AG04449 (cell line): ENCODE measurements at regions of chr17 and their contacts with region 1.

Region 1: GRCh38 chr17:48047741-48048383 is at the start of gene NFE2L1:
- DNase-seq: peak; percentile 98
- H3K4me3 ChIP-seq: peak within 1 kb of the TSS; percentile 93
- CTCF ChIP-seq: no peak

Region 2: GRCh38 chr17:47305302-47305923 is 742.4 kb before region 1 on chr17:
- CTCF ChIA-PET with region 1: no interaction called
- POLR2A ChIA-PET with region 1: no interaction called
- DNase-seq: peak; percentile 85
- H3K4me3 ChIP-seq: no peak overlapping the region
- CTCF ChIP-seq: no peak

Region 3: DNA sequence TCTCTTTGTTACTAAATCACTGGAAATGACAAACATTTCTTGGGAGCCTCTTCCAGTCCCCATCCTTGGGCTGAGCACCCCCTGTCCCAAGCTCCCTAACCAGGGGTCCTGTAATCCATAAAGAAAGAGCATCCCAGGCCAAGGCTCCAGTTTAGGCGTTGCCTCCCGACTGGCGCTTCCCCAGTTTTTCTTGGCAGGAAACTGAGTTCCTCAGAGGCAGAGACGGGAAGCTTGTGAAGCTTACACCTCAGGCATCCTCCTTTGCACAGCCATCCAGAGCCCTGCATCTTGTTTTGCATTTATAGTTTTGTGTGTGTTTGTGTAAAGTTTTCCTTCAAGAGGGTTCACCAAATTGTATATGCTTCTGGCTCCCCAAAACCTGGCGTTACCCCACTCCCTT is 17.3 kb before region 1 on chr17:
- CTCF ChIA-PET with region 1: interaction called, 28 read pairs
- POLR2A ChIA-PET with region 1: interaction called, 36 read pairs
- DNase-seq: no peak
- H3K4me3 ChIP-seq: no peak overlapping the region
- CTCF ChIP-seq: no peak

Region 4: GRCh38 chr17:48037036-48037837 is 10.6 kb before region 1 on chr17 and contains the start of gene COPZ2:
- CTCF ChIA-PET with region 1: interaction called, 14 read pairs
- POLR2A ChIA-PET with region 1: interaction called, 27 read pairs
- DNase-seq: no peak
- H3K4me3 ChIP-seq: peak within 1 kb of the TSS; percentile 76
- CTCF ChIP-seq: peak; percentile 81

Region 5: GRCh38 chr17:48101012-48101720 is 53.3 kb after region 1 on chr17 and contains the start of gene CBX1:
- CTCF ChIA-PET with region 1: interaction called, 4 read pairs
- POLR2A ChIA-PET with region 1: interaction called, 13 read pairs
- DNase-seq: peak; percentile 46
- H3K4me3 ChIP-seq: peak within 1 kb of the TSS; percentile 88
- CTCF ChIP-seq: no peak

Region 6: GRCh38 chr17:48322060-48322459 is 274.2 kb after region 1 on chr17:
- CTCF ChIA-PET with region 1: no interaction called
- POLR2A ChIA-PET with region 1: no interaction called
- DNase-seq: no peak
- H3K4me3 ChIP-seq: no peak overlapping the region
- CTCF ChIP-seq: no peak